ENCODE measurements at regions of chr5 and their contacts with region 1.

Region 1: DNA sequence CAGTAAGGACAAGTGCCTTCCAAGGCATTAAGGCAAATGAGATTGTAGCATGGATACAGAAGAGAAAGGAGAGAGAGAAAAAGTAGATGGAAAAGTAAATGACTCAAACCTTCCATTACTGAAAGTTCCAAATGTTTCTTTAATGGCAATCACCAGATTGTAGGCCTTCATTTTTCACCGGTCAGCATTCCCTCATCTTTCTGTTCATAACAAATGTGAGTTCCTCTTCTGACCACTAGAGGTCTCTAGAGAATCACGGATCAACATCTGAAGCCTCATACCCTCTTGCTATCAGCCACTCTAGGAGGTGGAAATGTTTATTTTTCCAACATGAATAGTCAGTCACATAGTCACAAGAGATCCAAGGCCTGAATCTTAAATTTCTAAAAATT is 73.6 kb upstream of the RPS23 start:
- DNase-seq: no peak
- H3K4me3 ChIP-seq: no peak overlapping the region
- H3K27ac ChIP-seq: peak overlapping the region in 2 of 4 donors; percentile 27 to 32
- H3K4me1 ChIP-seq: peaks cover 20 to 38% (median 25%) of the 10 kb centered on the region in 4 donors
- H3K27me3 ChIP-seq: no peaks in the 10 kb centered on the region
- CTCF ChIP-seq: peak; percentile 65 to 82 (median 73)
- EP300 ChIP-seq: no peak
- POLR2A ChIP-seq: no peak

Region 2: DNA sequence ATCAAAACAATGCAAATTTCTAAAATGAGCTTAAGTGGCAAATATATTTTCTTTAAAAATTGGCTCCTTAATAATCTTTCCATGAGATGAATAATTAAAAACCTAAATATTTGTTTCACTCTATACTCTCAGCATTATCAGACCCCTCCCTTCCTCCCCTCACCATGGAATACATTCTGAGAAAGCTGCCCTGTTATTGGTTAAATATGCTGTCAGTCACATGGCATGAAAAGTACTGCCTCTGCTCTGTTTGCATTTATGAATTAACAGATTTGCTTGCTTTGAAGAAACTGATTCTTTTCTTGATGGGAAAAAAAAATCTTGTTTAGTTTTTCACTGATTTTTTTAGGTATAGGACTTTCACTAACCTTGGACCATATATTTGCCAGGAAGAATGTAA is 56.6 kb before region 1 on chr5:
- intact Hi-C with region 1: no loop called
- DNase-seq: no peak
- H3K4me3 ChIP-seq: no peak overlapping the region
- H3K27ac ChIP-seq: no peak overlapping the region
- H3K4me1 ChIP-seq: no peaks in the 10 kb centered on the region
- H3K27me3 ChIP-seq: no peaks in the 10 kb centered on the region
- CTCF ChIP-seq: no peak
- EP300 ChIP-seq: no peak
- POLR2A ChIP-seq: no peak

Region 3: GRCh38 chr5:82560561-82560960 is 208.8 kb after region 1 on chr5:
- intact Hi-C with region 1: no loop called
- DNase-seq: no peak
- H3K4me3 ChIP-seq: no peak overlapping the region
- H3K27ac ChIP-seq: no peak overlapping the region
- H3K4me1 ChIP-seq: no peaks in the 10 kb centered on the region
- H3K27me3 ChIP-seq: peaks cover 0 to 13% (median 0%) of the 10 kb centered on the region in 4 donors
- CTCF ChIP-seq: no peak
- EP300 ChIP-seq: no peak
- POLR2A ChIP-seq: no peak

Region 4: DNA sequence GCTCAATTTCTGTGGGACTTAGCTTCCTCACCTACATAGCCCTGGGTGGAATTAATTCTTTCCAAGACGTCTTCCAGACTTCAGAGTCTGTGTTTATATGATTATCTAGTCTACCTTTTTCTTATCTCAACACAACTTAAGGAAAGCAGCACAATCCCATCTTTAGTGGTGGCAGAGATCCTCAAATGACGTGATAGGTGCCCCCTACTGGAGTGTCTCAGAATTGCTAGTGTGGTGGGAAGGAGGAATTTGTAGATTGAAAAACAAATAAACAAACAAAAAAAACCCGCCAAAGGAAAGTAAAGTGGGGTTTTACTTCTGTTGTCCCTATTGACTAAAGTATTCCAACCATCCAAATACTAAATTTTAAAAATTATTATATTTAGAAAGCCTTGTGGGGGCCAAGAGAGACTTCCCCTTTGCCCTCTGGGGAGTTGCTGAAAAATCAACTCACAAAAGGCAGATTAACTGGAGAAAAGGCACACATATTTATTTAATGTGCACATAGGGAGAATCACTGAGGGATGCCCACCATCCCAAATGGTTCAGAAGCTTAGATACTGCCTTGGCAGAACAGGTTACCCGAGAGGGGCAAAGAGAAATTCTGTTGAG is 442.2 kb after region 1 on chr5:
- intact Hi-C with region 1: loop called (anchors 10 kb)
- DNase-seq: no peak
- H3K4me3 ChIP-seq: no peak overlapping the region
- H3K27ac ChIP-seq: no peak overlapping the region
- H3K4me1 ChIP-seq: no peaks in the 10 kb centered on the region
- H3K27me3 ChIP-seq: no peaks in the 10 kb centered on the region
- CTCF ChIP-seq: peak; percentile 28 to 69 (median 48)
- EP300 ChIP-seq: no peak
- POLR2A ChIP-seq: no peak

Region 5: GRCh38 chr5:83026930-83027687 is 675.4 kb after region 1 on chr5:
- intact Hi-C with region 1: no loop called
- DNase-seq: no peak
- H3K4me3 ChIP-seq: no peak overlapping the region
- H3K27ac ChIP-seq: no peak overlapping the region
- H3K4me1 ChIP-seq: no peaks in the 10 kb centered on the region
- H3K27me3 ChIP-seq: no peaks in the 10 kb centered on the region
- CTCF ChIP-seq: no peak
- EP300 ChIP-seq: no peak
- POLR2A ChIP-seq: no peak

Region 6: GRCh38 chr5:83564069-83564749 is 1212.5 kb after region 1 on chr5:
- intact Hi-C with region 1: loop called (anchors 5 kb)
- DNase-seq: no peak
- H3K4me3 ChIP-seq: no peak overlapping the region
- H3K27ac ChIP-seq: no peak overlapping the region
- H3K4me1 ChIP-seq: peaks cover 0 to 11% (median 0%) of the 10 kb centered on the region in 4 donors
- H3K27me3 ChIP-seq: no peaks in the 10 kb centered on the region
- CTCF ChIP-seq: peak; percentile 50 to 64 (median 60)
- EP300 ChIP-seq: no peak
- POLR2A ChIP-seq: no peak